H1 (cell line): ENCODE measurements at regions of chr9 and their contacts with region 1.

Region 1: GRCh38 chr9:128034821-128035764 is 32.0 kb downstream of the NAIF1 start:
- DNase-seq: peak; percentile 79 to 81
- H3K4me3 ChIP-seq: no peak overlapping the region
- H3K27ac ChIP-seq: no peak overlapping the region
- H3K4me1 ChIP-seq: peaks cover 0 to 3% (median 1%) of the 10 kb centered on the region in 4 experiments; a peak in 4 of 7 replicates
- H3K27me3 ChIP-seq: no peaks in the 10 kb centered on the region
- CTCF ChIP-seq: peak; percentile 62 to 98 (median 93)
- EP300 ChIP-seq: peak in 1 of 2 experiments; percentile 25; a peak in 1 of 3 replicates
- POLR2A ChIP-seq: no peak
- RAD21 ChIP-seq: peak; percentile 98 to 99

Region 2: GRCh38 chr9:127916665-127917613 is 118.2 kb before region 1 on chr9 and contains the start of gene ST6GALNAC4:
- CTCF ChIA-PET with region 1: interaction called, 20 read pairs
- POLR2A ChIA-PET with region 1: interaction called, 3 read pairs
- DNase-seq: peak in 1 of 2 experiments; percentile 97
- H3K4me3 ChIP-seq: peak within 1 kb of the TSS; percentile 55 to 70 (median 60)
- H3K27ac ChIP-seq: no peak within 1 kb of the TSS
- H3K4me1 ChIP-seq: peaks cover 4 to 8% (median 7%) of the 10 kb centered on the region in 4 experiments
- H3K27me3 ChIP-seq: peaks cover 0 to 12% (median 10%) of the 10 kb centered on the region in 4 experiments; a peak in 5 of 7 replicates
- CTCF ChIP-seq: no peak
- EP300 ChIP-seq: no peak
- POLR2A ChIP-seq: no peak
- RAD21 ChIP-seq: no peak
- total RNA-seq, gene ST6GALNAC4: 21.8 and 27.0 TPM in 2 replicates

Region 3: DNA sequence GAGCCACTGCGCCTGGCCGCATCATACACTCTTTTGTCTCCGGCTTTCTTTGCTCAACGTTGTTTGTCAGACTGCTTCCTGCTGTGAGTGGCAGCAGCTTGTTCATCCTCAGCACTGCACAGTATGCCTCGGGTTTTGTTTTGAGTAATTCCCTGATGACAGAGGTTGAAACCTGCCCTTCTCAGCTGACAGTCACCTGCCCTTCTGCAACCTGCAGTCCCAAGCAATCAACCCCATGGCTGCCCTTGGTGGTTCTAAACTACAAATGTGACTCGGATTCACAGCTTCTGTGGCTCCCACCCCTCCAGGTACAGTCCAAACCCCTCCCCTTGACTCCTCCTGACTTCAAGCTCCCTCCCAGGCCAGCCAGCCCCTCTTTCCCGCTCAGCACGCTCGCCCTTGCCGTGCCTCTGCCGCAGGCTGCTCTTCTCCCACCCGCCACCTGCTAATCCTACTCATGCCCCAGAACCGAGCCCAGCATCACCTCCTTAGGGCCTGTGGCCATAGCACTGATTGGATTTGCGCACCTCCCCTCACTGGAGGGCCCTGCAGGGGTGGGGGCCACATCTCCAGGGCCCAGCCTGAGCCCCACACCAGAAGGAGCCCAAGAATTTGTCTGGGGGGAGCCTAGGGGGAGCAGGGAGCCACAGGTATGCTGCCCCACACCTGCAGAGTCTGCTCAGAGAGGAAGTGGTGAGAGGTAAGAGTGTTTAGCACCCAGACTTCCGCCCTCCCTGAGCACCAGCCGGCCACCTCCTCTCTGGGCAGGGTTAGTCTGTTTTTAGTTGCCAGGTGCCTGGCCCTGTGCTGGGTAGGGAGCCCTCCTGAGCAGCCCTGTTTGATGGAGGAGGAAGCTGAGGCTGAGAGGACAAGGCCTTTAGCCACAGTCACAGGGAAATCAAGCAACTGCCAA is 64.4 kb before region 1 on chr9:
- CTCF ChIA-PET with region 1: interaction called, 825 read pairs
- POLR2A ChIA-PET with region 1: no interaction called
- DNase-seq: no peak
- H3K4me3 ChIP-seq: no peak overlapping the region
- H3K27ac ChIP-seq: peak overlapping the region; percentile 30; the same call in 1 of the 2 replicates
- H3K4me1 ChIP-seq: peaks cover 0 to 62% (median 39%) of the 10 kb centered on the region in 4 experiments; a peak in 6 of 7 replicates
- H3K27me3 ChIP-seq: no peaks in the 10 kb centered on the region
- CTCF ChIP-seq: no peak
- EP300 ChIP-seq: no peak
- POLR2A ChIP-seq: no peak
- RAD21 ChIP-seq: no peak

Region 4: GRCh38 chr9:128007566-128008138 is 27.4 kb before region 1 on chr9:
- CTCF ChIA-PET with region 1: interaction called, 10 read pairs
- POLR2A ChIA-PET with region 1: interaction called, 3 read pairs
- DNase-seq: no peak
- H3K4me3 ChIP-seq: no peak overlapping the region
- H3K27ac ChIP-seq: no peak overlapping the region
- H3K4me1 ChIP-seq: peaks cover 4 to 7% (median 6%) of the 10 kb centered on the region in 4 experiments; a peak in 6 of 7 replicates
- H3K27me3 ChIP-seq: no peaks in the 10 kb centered on the region
- CTCF ChIP-seq: no peak
- EP300 ChIP-seq: no peak
- POLR2A ChIP-seq: no peak
- RAD21 ChIP-seq: no peak

Region 5: DNA sequence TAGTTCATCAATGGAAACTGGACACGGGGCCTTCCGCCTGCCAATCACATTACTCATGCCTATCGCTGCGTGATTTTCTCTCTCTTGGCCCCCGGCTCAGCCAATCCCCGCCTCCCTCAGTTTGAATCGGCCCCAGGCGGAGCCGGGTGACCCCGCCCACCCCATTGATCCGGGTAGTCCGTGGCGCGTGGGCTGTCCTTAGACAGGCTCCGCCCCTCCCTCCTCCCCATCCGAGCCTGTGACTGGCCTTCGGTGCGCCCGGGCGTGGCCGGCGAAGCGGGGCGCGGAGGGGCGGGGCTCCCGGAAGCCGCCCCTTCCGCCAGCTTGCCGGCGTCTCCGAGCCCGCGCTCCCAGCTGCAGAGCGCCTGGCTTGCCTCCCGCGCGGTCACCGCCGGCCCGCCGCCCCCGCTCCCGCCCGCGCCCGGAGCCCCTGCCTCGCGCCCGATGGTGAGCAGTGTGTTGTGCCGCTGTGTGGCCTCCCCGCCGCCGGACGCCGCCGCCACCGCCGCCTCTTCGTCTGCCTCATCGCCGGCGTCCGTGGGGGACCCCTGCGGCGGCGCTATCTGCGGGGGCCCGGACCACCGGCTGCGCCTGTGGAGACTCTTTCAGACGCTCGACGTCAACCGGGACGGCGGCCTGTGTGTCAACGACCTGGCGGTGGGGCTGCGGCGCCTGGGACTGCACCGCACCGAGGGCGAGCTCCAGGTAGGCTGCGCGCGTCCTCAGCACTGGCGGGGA is 33.0 kb after region 1 on chr9 and contains the start of gene SLC25A25:
- CTCF ChIA-PET with region 1: interaction called, 12 read pairs
- POLR2A ChIA-PET with region 1: no interaction called
- DNase-seq: peak; percentile 98 to 100
- H3K4me3 ChIP-seq: peak within 1 kb of the TSS; percentile 75 to 84 (median 82)
- H3K27ac ChIP-seq: peak within 1 kb of the TSS; percentile 92
- H3K4me1 ChIP-seq: peaks cover 10 to 16% (median 12%) of the 10 kb centered on the region in 4 experiments
- H3K27me3 ChIP-seq: no peaks in the 10 kb centered on the region; a peak in 1 of 7 replicates
- CTCF ChIP-seq: no peak
- EP300 ChIP-seq: no peak
- POLR2A ChIP-seq: no peak
- RAD21 ChIP-seq: no peak
- total RNA-seq, gene SLC25A25: 16.8 and 18.5 TPM in 2 replicates

Region 6: DNA sequence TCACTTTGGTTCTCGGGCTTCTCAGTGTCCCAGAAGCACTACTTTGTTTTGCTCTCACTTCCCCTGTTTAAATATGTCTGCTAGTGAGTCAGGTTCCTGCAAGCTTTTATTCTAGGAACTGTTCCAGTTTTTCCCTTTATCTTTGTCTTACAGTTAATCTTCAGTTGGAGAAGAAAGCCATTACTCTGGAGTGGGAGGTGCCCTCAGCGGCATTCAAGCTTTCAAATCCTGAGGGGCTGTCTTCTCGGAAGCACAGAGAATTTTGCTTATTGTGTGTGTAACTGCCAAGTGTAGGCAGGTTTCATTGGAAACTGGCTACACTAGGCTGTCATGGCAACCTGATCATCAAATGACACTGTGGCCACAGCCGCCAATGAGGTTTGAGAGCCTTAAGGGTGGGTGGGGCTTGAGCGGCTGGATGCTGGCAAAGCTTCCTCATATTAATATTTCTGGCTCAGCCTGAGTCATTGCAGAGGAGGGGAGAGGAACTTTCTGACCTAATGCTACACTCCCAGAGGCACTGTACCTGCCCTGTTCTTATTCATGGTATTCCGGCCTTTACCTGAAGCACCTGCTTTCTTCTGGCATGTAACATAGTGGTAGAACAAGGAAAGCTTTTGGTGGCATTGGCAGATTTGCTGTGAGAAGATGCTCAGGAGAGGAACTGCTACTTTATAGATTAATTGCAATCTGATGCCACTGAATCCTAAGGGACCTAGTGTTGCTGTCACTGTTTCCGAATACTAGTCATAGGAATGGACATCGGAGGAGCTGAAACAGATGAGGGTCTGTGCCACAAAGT is 59.3 kb after region 1 on chr9:
- CTCF ChIA-PET with region 1: interaction called, 10 read pairs
- POLR2A ChIA-PET with region 1: interaction called, 3 read pairs
- DNase-seq: no peak
- H3K4me3 ChIP-seq: no peak overlapping the region
- H3K27ac ChIP-seq: peak overlapping the region; percentile 46; the same call in 1 of the 2 replicates
- H3K4me1 ChIP-seq: peaks cover 0 to 16% (median 14%) of the 10 kb centered on the region in 4 experiments; a peak in 6 of 7 replicates
- H3K27me3 ChIP-seq: no peaks in the 10 kb centered on the region
- CTCF ChIP-seq: no peak
- EP300 ChIP-seq: no peak
- POLR2A ChIP-seq: no peak
- RAD21 ChIP-seq: no peak

Region 7: GRCh38 chr9:128117613-128118471 is 82.7 kb after region 1 on chr9:
- CTCF ChIA-PET with region 1: interaction called, 10 read pairs
- POLR2A ChIA-PET with region 1: no interaction called
- DNase-seq: peak; percentile 91 to 100
- H3K4me3 ChIP-seq: peak overlapping the region in 2 of 4 experiments; percentile 14 to 40; a peak in 5 of 8 replicates
- H3K27ac ChIP-seq: no peak overlapping the region
- H3K4me1 ChIP-seq: peaks cover 0 to 4% (median under 1%) of the 10 kb centered on the region in 4 experiments; a peak in 3 of 7 replicates
- H3K27me3 ChIP-seq: no peaks in the 10 kb centered on the region
- CTCF ChIP-seq: peak in 2 of 3 experiments; percentile 100; a peak in 3 of 4 replicates
- EP300 ChIP-seq: no peak
- POLR2A ChIP-seq: peak in 1 of 2 experiments; percentile 21; a peak in 1 of 3 replicates
- RAD21 ChIP-seq: peak; percentile 95

Region 8: DNA sequence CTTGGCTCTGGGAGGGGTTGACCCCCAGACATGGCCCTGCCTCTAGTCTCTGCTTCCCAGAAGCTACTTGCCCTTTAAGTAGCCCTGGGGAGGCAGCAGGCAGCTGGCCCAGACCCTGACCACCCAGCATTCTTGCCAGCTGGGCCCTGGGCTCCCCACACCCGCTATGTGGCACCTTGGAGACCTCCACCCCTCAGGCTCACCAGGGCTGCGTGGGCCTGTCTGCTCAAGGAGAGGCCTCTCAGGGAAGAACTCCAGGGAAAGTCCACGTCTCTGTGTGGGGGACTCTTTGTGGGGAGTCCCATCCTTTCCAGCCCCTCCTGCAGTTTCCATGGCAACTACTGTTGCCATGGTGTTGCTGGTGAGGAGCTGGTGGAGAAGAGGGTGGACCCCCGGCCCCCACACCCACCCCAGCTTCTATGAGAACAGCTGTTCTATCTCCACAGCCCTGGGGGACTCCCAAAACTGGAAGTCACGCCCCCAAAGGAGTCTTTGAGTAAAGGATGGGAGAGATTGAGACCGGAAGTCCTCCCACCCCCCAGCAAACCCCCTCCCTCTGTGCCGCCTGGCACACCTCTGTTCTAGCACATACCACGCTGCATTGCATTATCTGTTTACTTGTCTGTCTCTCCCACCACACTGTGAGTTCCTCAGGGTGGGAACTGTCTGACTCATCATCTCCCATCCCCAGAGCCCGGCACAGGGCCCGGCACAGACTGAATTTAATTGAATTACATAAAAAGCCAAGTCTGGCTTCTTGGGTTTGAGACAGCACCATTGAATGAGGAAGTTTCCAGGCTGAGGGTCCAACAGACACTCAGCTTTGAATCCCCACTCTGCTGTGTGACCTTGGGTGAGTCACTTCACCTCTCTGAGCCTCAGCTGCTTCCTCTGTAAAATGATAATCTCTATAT is 180.7 kb after region 1 on chr9:
- CTCF ChIA-PET with region 1: no interaction called
- POLR2A ChIA-PET with region 1: no interaction called
- DNase-seq: no peak
- H3K4me3 ChIP-seq: no peak overlapping the region
- H3K27ac ChIP-seq: no peak overlapping the region
- H3K4me1 ChIP-seq: peaks cover 0 to 12% (median 5%) of the 10 kb centered on the region in 4 experiments; a peak in 5 of 7 replicates
- H3K27me3 ChIP-seq: no peaks in the 10 kb centered on the region
- CTCF ChIP-seq: no peak
- EP300 ChIP-seq: no peak
- POLR2A ChIP-seq: no peak
- RAD21 ChIP-seq: no peak